A549 (cell line): ENCODE measurements at regions of chr9 and their contacts with region 1.

Region 1: DNA sequence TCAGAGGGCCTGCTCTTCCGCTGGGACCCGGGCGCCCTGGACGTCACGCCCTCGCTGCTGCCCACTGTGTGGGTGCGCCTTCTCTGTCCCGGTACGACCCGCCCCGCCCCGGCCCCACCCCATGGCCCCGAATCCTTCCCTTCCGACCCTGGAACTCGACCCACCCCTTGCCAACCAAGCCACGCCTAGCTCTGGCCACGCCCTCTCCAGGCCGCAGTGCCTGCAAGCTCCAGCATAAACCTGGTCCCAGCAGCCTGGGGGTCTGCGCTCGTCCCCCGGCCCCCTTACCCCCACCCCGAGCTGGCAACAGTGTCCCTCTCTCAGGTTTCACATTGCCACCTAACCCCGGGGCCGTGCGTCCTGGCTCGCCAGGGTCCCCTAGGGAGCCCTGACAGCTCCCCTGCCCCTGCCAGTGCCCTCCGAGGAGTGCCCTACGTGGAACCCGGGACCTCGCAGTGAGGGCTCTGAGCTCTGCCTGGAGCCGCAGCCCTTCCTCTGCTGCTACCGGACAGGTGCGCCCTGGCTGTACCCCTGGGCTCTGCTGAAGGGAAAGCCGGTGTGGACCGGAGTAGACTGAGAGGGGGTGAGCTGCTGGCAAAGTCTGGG is 3.4 kb downstream of the ADGRD2 start:
- DNase-seq: peak; percentile 71 to 75
- ATAC-seq: peak; percentile 70 to 88
- H3K4me3 ChIP-seq: peak overlapping the region; percentile 61
- H3K27ac ChIP-seq: peak overlapping the region; percentile 79 to 84
- H3K4me1 ChIP-seq: peaks cover 7% of the 10 kb centered on the region; the same call in 2 of the 3 replicates
- CTCF ChIP-seq: no peak
- EP300 ChIP-seq: no peak
- POLR2A ChIP-seq: no peak; the same call in 1 of the 2 replicates
- RAD21 ChIP-seq: no peak

Region 2: GRCh38 chr9:124415102-124415851 is 38.4 kb before region 1 on chr9 and contains the start of gene PSMB7:
- CTCF ChIA-PET with region 1: interaction called, 13 read pairs
- POLR2A ChIA-PET with region 1: no interaction called
- DNase-seq: peak; percentile 92 to 99
- ATAC-seq: peak; percentile 86 to 90
- H3K4me3 ChIP-seq: peak within 1 kb of the TSS; percentile 80
- H3K27ac ChIP-seq: peak within 1 kb of the TSS; percentile 70 to 91
- H3K4me1 ChIP-seq: peaks cover 35% of the 10 kb centered on the region
- CTCF ChIP-seq: peak; percentile 71
- EP300 ChIP-seq: no peak
- POLR2A ChIP-seq: peak; percentile 41; the same call in 1 of the 2 replicates
- RAD21 ChIP-seq: no peak
- polyA plus RNA-seq, gene PSMB7: 418 and 429 TPM in 2 replicates

Region 3: GRCh38 chr9:124617471-124618141 is 163.9 kb after region 1 on chr9:
- CTCF ChIA-PET with region 1: no interaction called
- POLR2A ChIA-PET with region 1: no interaction called
- DNase-seq: peak; percentile 78 to 87
- ATAC-seq: peak; percentile 98 to 99
- H3K4me3 ChIP-seq: no peak overlapping the region
- H3K27ac ChIP-seq: peak overlapping the region; percentile 28 to 70; a peak in 4 of 6 replicates
- H3K4me1 ChIP-seq: peaks cover 15% of the 10 kb centered on the region
- CTCF ChIP-seq: peak; percentile 96
- EP300 ChIP-seq: no peak
- POLR2A ChIP-seq: no peak
- RAD21 ChIP-seq: peak; percentile 95 to 98